ENCODE measurements at regions of chr12 and their contacts with region 1.

Region 1: DNA sequence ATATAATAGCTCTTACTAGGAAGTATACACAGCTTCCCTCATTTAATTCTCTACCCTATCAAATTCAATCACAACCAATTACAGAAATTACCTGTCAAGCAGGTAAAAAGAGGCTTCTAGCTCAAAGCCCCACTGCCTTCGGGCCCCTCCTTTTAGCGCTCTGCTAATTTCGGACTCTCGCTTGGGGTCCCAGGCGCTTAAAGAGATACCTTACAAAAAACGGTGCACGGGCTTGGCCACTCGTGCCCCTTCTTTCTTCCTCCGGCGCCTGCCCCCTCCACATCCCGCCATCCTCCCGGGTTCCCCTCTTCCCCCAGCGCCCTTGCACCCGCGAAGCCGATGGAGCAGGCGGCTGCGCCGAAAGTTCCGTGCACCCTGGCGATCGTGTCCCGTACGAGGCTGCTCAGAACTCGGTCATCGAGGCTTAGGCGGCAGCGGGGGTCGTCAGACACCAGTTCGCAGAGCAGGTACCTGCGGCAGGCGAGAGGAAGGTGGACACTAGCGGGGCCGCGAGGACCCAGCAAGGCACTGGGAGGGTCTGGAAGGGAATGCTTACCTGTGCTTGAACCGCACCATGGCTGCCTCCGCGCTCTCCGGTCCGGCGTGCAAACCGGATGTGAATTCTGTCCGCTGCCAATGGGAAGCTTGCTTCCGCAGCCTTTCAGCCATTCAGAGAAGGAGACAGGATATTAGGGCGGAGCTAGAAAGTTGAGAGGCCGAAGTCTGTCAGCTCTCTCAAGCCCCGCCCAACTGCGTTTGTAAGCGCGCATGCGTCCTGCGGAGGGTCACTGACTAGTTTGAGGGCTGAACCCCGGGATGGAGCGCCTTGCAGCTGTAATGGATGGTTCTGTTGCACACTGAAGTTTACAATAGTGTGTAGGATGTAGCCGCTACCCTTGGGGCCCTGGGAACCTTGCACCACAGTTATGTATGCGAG is at the start of gene POP5:
- DNase-seq: peak; percentile 96
- ATAC-seq: peak; percentile 97
- H3K4me3 ChIP-seq: peak within 1 kb of the TSS; percentile 84 to 94 (median 92)
- H3K27ac ChIP-seq: peak within 1 kb of the TSS; percentile 68 to 86 (median 80)
- H3K4me1 ChIP-seq: peaks cover 6 to 14% of the 10 kb centered on the region in 2 donors
- H3K27me3 ChIP-seq: no peaks in the 10 kb centered on the region
- CTCF ChIP-seq: no peak
- POLR2A ChIP-seq: peak; percentile 24 to 49
- total RNA-seq, gene POP5: 12.2 to 23.3 (median 15.2) TPM

Region 2: GRCh38 chr12:120534203-120534702 is 46.8 kb before region 1 on chr12 and contains the start of gene RNF10:
- in situ Hi-C with region 1: no loop called
- intact Hi-C with region 1: loop called (anchors 5 kb)
- DNase-seq: peak; percentile 77 to 82
- ATAC-seq: peak; percentile 76 to 83
- H3K4me3 ChIP-seq: peak within 1 kb of the TSS; percentile 68 to 89 (median 83)
- H3K27ac ChIP-seq: peak within 1 kb of the TSS; percentile 92 to 99 (median 97)
- H3K4me1 ChIP-seq: peaks cover 38 to 42% of the 10 kb centered on the region in 2 donors
- H3K27me3 ChIP-seq: no peaks in the 10 kb centered on the region
- CTCF ChIP-seq: no peak
- POLR2A ChIP-seq: peak; percentile 99 to 100
- total RNA-seq, gene RNF10: 152 to 282 (median 247) TPM

Region 3: GRCh38 chr12:120563495-120563894 is 17.6 kb before region 1 on chr12:
- in situ Hi-C with region 1: no loop called
- intact Hi-C with region 1: no loop called
- DNase-seq: no peak
- ATAC-seq: no peak
- H3K4me3 ChIP-seq: no peak overlapping the region
- H3K27ac ChIP-seq: peak overlapping the region; percentile 57 to 78 (median 71)
- H3K4me1 ChIP-seq: peaks cover 5 to 18% of the 10 kb centered on the region in 2 donors
- H3K27me3 ChIP-seq: no peaks in the 10 kb centered on the region
- CTCF ChIP-seq: no peak
- POLR2A ChIP-seq: no peak

Region 4: DNA sequence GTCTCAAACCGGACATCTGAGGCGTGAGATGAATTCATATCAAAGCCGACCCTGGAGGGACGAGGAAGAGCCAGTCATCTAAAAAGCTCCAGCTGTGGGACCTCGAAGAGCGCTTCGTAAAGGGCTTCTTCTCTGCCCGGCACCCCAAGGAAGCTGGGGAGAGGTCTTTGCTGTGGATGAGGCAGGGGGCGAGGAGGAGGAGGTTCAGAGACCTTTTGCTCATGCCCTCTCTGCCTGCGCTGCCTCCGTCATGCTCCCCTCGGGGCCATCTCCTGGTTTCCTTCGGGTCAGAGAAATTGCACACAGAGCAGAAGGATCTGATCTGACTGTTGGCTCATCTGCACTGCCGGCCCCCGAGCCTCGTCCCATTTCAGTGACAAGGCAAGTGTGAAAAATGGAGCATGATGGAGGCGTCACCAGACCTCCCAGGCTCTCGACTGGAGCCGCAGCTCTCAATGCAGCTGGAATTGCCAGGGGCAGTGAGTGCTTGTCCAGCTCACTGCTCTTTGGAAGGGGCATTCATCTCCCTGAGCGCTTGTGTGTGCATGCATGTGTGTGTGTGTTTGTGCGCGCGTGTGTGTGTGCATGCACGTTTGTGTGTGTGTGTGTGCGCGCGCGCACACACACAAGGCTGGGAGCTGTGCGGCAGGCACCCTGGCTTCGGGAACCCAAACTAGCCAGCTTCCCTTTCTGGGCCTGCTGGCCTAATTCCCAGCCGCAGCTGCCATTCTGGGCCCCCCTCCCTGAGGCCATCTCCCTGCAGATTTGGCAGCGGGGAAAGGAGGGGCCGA is 68.6 kb after region 1 on chr12:
- in situ Hi-C with region 1: loop called in 3 of 4 experiments (anchors 5 to 10 kb)
- intact Hi-C with region 1: loop called (anchors 1 kb)
- DNase-seq: no peak
- ATAC-seq: no peak
- H3K4me3 ChIP-seq: peak overlapping the region; percentile 33 to 47 (median 40)
- H3K27ac ChIP-seq: peak overlapping the region in 3 of 4 donors; percentile 38 to 45 (median 43)
- H3K4me1 ChIP-seq: peaks cover 14 to 17% of the 10 kb centered on the region in 2 donors
- H3K27me3 ChIP-seq: peaks cover 3 to 11% (median 10%) of the 10 kb centered on the region in 3 donors
- CTCF ChIP-seq: peak in 1 of 5 experiments; percentile 28
- POLR2A ChIP-seq: no peak

Region 5: GRCh38 chr12:120669055-120669840 is 88.2 kb after region 1 on chr12:
- in situ Hi-C with region 1: no loop called
- intact Hi-C with region 1: no loop called
- DNase-seq: no peak
- ATAC-seq: no peak
- H3K4me3 ChIP-seq: no peak overlapping the region
- H3K27ac ChIP-seq: no peak overlapping the region
- H3K4me1 ChIP-seq: no peaks in the 10 kb centered on the region
- H3K27me3 ChIP-seq: no peaks in the 10 kb centered on the region
- CTCF ChIP-seq: no peak
- POLR2A ChIP-seq: no peak

Region 6: DNA sequence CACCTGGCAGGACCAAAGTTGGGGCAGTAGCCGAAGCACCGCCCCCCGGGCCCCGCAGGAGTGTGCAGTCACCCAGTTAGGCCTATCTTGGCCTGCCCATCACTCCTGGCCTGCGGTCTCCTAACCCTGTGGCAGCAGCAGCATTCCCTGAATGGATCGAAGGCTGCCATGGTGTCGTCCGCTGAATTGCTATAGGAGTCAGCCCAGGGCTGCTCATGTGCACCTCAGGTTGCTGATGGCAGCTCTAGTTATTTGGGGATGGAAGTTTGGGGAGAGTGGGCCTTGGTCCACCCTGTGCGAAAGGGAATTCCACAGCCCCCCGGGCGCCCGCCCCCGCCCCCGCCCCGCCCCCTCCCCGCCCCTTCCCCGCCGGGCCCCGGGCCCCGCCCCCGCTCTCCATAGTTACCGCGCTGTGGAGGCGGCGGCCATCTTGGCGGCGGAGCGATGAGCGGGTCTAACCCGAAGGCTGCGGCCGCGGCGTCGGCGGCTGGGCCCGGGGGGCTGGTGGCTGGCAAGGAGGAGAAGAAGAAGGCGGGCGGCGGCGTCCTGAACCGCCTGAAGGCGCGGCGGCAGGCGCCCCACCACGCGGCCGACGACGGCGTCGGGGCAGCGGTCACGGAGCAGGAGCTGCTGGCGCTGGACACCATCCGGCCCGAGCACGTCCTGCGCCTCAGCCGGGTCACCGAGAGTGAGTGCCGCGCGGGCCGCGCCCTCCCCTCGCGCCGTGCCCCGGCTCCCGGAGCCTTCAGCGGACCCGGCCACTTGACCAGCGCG is 129.2 kb after region 1 on chr12 and contains the start of gene UNC119B:
- in situ Hi-C with region 1: loop called (anchors 10 kb)
- intact Hi-C with region 1: loop called (anchors 2 kb)
- DNase-seq: peak in 1 of 2 donors; percentile 42
- ATAC-seq: peak; percentile 79 to 81
- H3K4me3 ChIP-seq: peak within 1 kb of the TSS; percentile 63 to 87 (median 74)
- H3K27ac ChIP-seq: peak within 1 kb of the TSS; percentile 69 to 94 (median 85)
- H3K4me1 ChIP-seq: peaks cover 19 to 25% of the 10 kb centered on the region in 2 donors
- H3K27me3 ChIP-seq: no peaks in the 10 kb centered on the region
- CTCF ChIP-seq: peak in 1 of 5 experiments; percentile 24
- POLR2A ChIP-seq: peak; percentile 20 to 41
- total RNA-seq, gene UNC119B: 4.7 to 8.7 (median 7.8) TPM

Region 7: GRCh38 chr12:120904197-120904773 is 323.2 kb after region 1 on chr12 and contains the start of gene SPPL3:
- in situ Hi-C with region 1: no loop called
- intact Hi-C with region 1: loop called (anchors 10 kb)
- DNase-seq: peak; percentile 82 to 89
- ATAC-seq: peak; percentile 84 to 85
- H3K4me3 ChIP-seq: peak within 1 kb of the TSS; percentile 89 to 99 (median 96)
- H3K27ac ChIP-seq: peak within 1 kb of the TSS; percentile 91 to 98 (median 94)
- H3K4me1 ChIP-seq: peaks cover 27 to 30% of the 10 kb centered on the region in 2 donors
- H3K27me3 ChIP-seq: no peaks in the 10 kb centered on the region
- CTCF ChIP-seq: peak in 1 of 5 experiments; percentile 33
- POLR2A ChIP-seq: peak; percentile 76 to 86
- total RNA-seq, gene SPPL3: 10.1 to 21.3 (median 10.6) TPM

Region 8: GRCh38 chr12:121015825-121016766 is 435.0 kb after region 1 on chr12 and contains the start of gene C12orf43:
- in situ Hi-C with region 1: no loop called
- intact Hi-C with region 1: loop called (anchors 5 kb)
- DNase-seq: peak; percentile 80 to 88
- ATAC-seq: peak; percentile 100
- H3K4me3 ChIP-seq: peak within 1 kb of the TSS; percentile 85 to 95 (median 88)
- H3K27ac ChIP-seq: peak within 1 kb of the TSS; percentile 76 to 85 (median 82)
- H3K4me1 ChIP-seq: peaks cover 9 to 10% of the 10 kb centered on the region in 2 donors
- H3K27me3 ChIP-seq: no peaks in the 10 kb centered on the region
- CTCF ChIP-seq: no peak
- POLR2A ChIP-seq: no peak
- total RNA-seq, gene C12orf43: 2.9 to 13.2 (median 5.1) TPM

Region 9: GRCh38 chr12:121110211-121110940 is 529.3 kb after region 1 on chr12:
- in situ Hi-C with region 1: no loop called
- intact Hi-C with region 1: loop called (anchors 1 kb)
- DNase-seq: peak; percentile 24 to 26
- ATAC-seq: peak; percentile 56 to 77
- H3K4me3 ChIP-seq: no peak overlapping the region
- H3K27ac ChIP-seq: no peak overlapping the region
- H3K4me1 ChIP-seq: no peaks in the 10 kb centered on the region
- H3K27me3 ChIP-seq: no peaks in the 10 kb centered on the region
- CTCF ChIP-seq: peak; percentile 72 to 91 (median 81)
- POLR2A ChIP-seq: no peak